GM18951 (cell line): ENCODE measurements at regions of chr17 and their contacts with region 1.

Region 1: DNA sequence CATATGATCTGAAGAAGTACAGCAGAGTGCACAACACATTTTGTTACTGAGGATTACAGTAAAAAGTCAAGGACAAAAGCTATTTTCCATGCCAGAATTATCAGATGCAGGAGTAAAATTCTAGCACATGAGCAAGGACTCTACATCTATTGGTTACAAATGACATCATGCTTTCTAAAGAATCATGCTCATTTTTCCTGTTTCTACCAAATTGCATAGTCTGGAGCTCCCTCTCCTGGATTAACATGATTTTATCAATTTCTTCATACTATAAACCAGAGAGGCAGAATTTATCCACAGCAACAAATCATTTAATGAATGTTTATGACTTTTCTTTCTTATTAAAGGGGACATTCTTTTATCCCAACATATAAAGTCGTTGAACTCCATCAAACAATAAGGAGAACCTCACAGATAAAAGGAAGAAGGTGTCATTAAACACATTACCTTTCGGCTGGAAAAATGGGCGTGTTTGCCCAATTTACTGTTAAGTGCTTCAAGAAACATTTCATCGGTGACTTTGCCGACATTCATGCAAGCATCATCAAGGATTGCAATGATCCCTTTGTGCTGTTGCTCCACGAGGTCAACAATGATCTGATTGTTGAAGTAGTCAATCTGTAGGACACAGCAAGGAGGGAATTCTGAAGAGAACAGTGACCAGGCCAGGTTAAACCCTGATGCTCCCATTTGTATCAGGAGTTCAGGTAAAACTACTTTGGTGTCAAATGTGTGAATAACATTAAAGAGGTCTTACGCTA is 121.7 kb downstream of the MYO1D start:
- POLR2A ChIP-seq: no peak

Region 2: DNA sequence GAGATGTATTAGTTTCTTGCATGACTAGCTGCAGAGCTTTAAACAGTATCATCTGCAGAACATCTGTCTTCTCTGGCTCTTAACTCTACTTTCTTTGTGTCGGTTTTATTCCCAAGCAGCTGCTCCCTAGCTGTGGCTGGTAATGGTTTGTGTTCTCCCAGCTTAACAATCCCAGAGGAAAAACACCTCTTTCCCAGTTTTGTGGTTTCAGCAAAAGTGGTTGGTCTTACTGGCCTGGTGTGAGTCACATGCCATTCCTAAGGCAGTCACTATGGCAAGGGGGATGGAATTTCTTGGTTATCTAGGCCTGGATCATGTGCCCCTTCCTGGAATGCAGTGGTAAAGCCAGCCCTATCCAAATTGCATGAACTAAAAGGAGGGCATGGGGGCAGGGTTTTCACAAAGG is 1485.6 kb before region 1 on chr17:
- in situ Hi-C with region 1: no loop called
- POLR2A ChIP-seq: no peak

Region 3: GRCh38 chr17:32458371-32458770 is 296.9 kb before region 1 on chr17:
- in situ Hi-C with region 1: loop called (anchors 10 kb)
- POLR2A ChIP-seq: no peak

Region 4: GRCh38 chr17:32569171-32570080 is 185.8 kb before region 1 on chr17:
- in situ Hi-C with region 1: no loop called
- POLR2A ChIP-seq: no peak